Ascending aorta (tissue), 2 donors: ENCODE measurements at regions of chr3 and their contacts with region 1.

Region 1: GRCh38 chr3:64267721-64268604 is 42.7 kb upstream of the PRICKLE2 start:
- DNase-seq: peak in 1 of 2 donors; percentile 86
- H3K4me3 ChIP-seq: peak overlapping the region; percentile 63 to 75
- H3K27ac ChIP-seq: peak overlapping the region; percentile 81 to 85
- H3K4me1 ChIP-seq: peaks cover 6 to 13% of the 10 kb centered on the region in 2 donors
- H3K27me3 ChIP-seq: no peaks in the 10 kb centered on the region
- CTCF ChIP-seq: peak in 1 of 3 experiments; percentile 4

Region 2: GRCh38 chr3:64023187-64023848 is 244.6 kb before region 1 on chr3 and contains the start of gene PSMD6:
- intact Hi-C with region 1: loop called (anchors 10 kb)
- DNase-seq: peak in 1 of 2 donors; percentile 93
- H3K4me3 ChIP-seq: peak within 1 kb of the TSS; percentile 86 to 95
- H3K27ac ChIP-seq: peak within 1 kb of the TSS; percentile 83 to 85
- H3K4me1 ChIP-seq: peaks cover 6 to 19% of the 10 kb centered on the region in 2 donors
- H3K27me3 ChIP-seq: no peaks in the 10 kb centered on the region
- CTCF ChIP-seq: peak; percentile 98 to 100 (median 99)
- total RNA-seq, gene PSMD6: 49.2 TPM

Region 3: GRCh38 chr3:64187065-64187959 is 80.7 kb before region 1 on chr3:
- intact Hi-C with region 1: loop called (anchors 2 kb)
- DNase-seq: peak; percentile 35 to 80
- H3K4me3 ChIP-seq: no peak overlapping the region
- H3K27ac ChIP-seq: peak overlapping the region; percentile 50 to 76
- H3K4me1 ChIP-seq: peaks cover 10 to 43% of the 10 kb centered on the region in 2 donors
- H3K27me3 ChIP-seq: no peaks in the 10 kb centered on the region
- CTCF ChIP-seq: no peak

Region 4: DNA sequence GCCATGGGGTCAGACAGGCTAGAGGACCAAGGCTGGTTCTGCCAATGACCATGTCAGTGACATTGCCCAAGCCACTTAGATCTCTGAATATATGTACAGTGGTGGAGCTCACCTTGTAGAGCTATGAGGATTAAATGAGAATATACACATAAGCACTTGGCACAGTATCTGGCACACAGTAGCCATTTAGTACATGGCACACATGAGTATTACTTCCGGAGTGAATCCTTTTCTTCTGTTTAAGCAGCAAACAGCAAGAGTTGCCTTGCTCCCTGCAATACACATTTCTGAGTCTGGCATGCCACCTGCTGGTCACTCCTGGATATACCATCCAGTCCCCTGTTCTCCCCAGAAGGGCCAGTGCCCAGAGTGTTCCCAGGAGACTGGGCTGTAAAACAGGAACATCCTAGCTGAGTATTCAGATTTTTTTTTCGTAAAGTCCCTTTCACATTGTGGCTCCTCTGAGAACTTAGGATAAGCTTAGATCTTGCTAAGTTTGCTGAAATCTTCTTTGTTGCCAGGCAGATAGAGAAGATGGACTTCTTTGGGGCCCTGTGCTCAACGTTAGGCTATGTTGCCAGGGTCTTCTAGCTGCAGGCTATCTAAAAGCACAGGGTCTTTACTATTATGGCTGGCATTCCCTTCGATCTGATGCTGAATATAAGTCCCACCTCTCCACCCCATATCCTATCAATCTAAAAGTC is 216.5 kb after region 1 on chr3:
- intact Hi-C with region 1: loop called (anchors 10 kb)
- DNase-seq: peak in 1 of 2 donors; percentile 82
- H3K4me3 ChIP-seq: no peak overlapping the region
- H3K27ac ChIP-seq: no peak overlapping the region
- H3K4me1 ChIP-seq: no peaks in the 10 kb centered on the region
- H3K27me3 ChIP-seq: no peaks in the 10 kb centered on the region
- CTCF ChIP-seq: peak; percentile 80 to 83 (median 83)

Region 5: DNA sequence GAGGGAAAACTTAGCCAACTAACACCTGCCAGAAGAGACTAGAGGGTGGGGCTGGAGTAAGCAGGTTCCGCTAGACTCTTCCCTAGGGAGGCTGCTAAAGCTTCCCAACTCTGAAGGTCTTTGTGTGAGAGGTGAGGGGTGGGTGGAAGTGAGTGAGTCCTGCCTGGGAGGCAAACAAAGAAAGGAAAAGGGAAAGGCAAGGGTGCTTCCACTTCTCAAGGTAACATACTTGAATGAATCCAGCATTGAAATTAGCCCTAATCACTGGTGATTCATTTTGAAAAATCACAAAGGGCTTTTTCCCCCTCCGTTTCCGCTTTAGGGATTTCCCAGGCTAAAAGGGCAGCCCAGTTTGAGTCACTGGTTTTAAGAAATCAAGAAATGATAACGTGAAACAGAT is 640.3 kb after region 1 on chr3:
- intact Hi-C with region 1: no loop called
- DNase-seq: no peak
- H3K4me3 ChIP-seq: no peak overlapping the region
- H3K27ac ChIP-seq: peak overlapping the region in 1 of 2 donors; percentile 24
- H3K4me1 ChIP-seq: peaks cover 0 to 4% of the 10 kb centered on the region in 2 donors
- H3K27me3 ChIP-seq: no peaks in the 10 kb centered on the region
- CTCF ChIP-seq: no peak